ENCODE measurements at regions of chr16 and their contacts with region 1.

Region 1: DNA sequence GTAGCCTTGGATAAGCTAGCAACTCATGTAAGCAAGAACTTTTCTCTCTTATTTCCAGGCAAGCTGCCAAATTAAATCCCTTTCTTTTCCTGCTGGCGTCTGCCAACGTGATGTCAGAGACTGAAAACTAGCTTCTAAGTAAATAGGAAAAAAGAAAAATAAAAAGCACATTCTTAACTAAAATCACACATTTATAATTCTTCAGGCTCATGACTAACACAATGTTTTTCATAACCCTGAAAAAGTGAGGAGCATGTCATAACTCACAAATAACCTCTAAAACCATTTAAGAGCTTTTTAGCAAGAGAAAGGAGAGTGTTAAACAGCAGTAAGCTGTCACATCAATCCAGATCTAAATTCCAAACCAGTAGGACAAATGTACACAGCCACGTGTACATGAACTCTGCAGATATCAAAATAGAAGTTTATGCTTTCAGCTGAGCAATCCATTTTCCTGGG is 110.0 kb downstream of the N4BP1 start:
- DNase-seq: no peak
- ATAC-seq: no peak
- H3K4me3 ChIP-seq: no peak overlapping the region
- H3K27ac ChIP-seq: no peak overlapping the region
- H3K4me1 ChIP-seq: peaks cover 30% of the 10 kb centered on the region
- H3K27me3 ChIP-seq: peaks cover 0 to 17% of the 10 kb centered on the region in 2 experiments; a peak in 2 of 5 replicates
- CTCF ChIP-seq: no peak
- EP300 ChIP-seq: no peak
- POLR2A ChIP-seq: no peak
- RAD21 ChIP-seq: no peak

Region 2: DNA sequence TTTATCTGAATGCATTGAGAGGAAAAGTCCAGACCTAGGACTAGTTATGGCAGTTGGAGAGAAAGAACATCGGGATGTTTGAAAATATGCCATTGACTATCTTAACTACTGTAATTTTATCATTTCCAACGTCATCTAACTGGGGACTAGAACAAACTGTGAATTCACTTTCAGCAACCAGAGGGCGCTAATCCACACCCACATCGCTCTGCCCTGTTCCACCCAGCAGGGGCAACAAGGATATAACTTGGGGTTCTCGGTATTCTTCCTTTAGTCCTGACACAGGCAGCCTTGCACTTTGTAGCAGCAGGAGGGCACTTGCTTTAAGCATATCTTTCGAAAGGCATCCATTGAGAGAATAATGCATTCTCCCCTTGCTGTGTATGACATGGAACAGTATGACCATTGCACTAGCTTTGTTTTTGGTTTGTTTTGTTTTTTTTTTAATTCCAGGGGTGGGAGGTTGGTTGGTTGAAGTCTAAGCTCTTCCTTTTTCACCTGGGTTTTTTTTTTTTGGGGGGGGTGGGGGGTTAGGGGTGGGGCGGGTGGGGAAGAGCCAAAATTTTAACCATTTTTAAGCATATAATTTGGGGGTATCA is 146.3 kb before region 1 on chr16:
- CTCF ChIA-PET with region 1: interaction called, 3 read pairs
- POLR2A ChIA-PET with region 1: no interaction called
- in situ Hi-C with region 1: no loop called
- intact Hi-C with region 1: loop called (anchors 1 kb)
- DNase-seq: peak; percentile 78
- ATAC-seq: peak; percentile 89
- H3K4me3 ChIP-seq: no peak overlapping the region
- H3K27ac ChIP-seq: no peak overlapping the region
- H3K4me1 ChIP-seq: no peaks in the 10 kb centered on the region
- H3K27me3 ChIP-seq: no peaks in the 10 kb centered on the region
- CTCF ChIP-seq: peak; percentile 90
- EP300 ChIP-seq: no peak
- POLR2A ChIP-seq: peak in 1 of 2 experiments; percentile 35; a peak in 1 of 4 replicates
- RAD21 ChIP-seq: peak; percentile 90

Region 3: GRCh38 chr16:48365581-48366164 is 134.3 kb before region 1 on chr16:
- CTCF ChIA-PET with region 1: no interaction called
- POLR2A ChIA-PET with region 1: no interaction called
- in situ Hi-C with region 1: no loop called
- intact Hi-C with region 1: no loop called
- DNase-seq: peak; percentile 83
- ATAC-seq: peak; percentile 99
- H3K4me3 ChIP-seq: peak overlapping the region; percentile 72 to 87 (median 75)
- H3K27ac ChIP-seq: peak overlapping the region; percentile 81
- H3K4me1 ChIP-seq: peaks cover 45% of the 10 kb centered on the region
- H3K27me3 ChIP-seq: no peaks in the 10 kb centered on the region; a peak in 1 of 5 replicates
- CTCF ChIP-seq: peak; percentile 53
- EP300 ChIP-seq: no peak
- POLR2A ChIP-seq: peak; percentile 93 to 96
- RAD21 ChIP-seq: no peak

Region 4: GRCh38 chr16:48409839-48410611 is 89.9 kb before region 1 on chr16:
- CTCF ChIA-PET with region 1: no interaction called
- POLR2A ChIA-PET with region 1: no interaction called
- in situ Hi-C with region 1: no loop called
- intact Hi-C with region 1: loop called (anchors 10 kb)
- DNase-seq: peak; percentile 93
- ATAC-seq: peak; percentile 96
- H3K4me3 ChIP-seq: peak overlapping the region in 2 of 3 experiments; percentile 2 to 47; a peak in 2 of 6 replicates
- H3K27ac ChIP-seq: no peak overlapping the region
- H3K4me1 ChIP-seq: peaks cover 51% of the 10 kb centered on the region
- H3K27me3 ChIP-seq: peaks cover 2 to 3% of the 10 kb centered on the region in 2 experiments; a peak in 1 of 5 replicates
- CTCF ChIP-seq: no peak
- EP300 ChIP-seq: peak; percentile 76 to 78; a peak in 3 of 4 replicates
- POLR2A ChIP-seq: no peak
- RAD21 ChIP-seq: peak; percentile 12; the same call in 1 of the 2 replicates